ENCODE measurements at regions of chr4 and their contacts with region 1.

Region 1: GRCh38 chr4:131084997-131085396 is 1989.0 kb downstream of the C4orf33 start:
- DNase-seq: no peak
- H3K4me3 Mint-ChIP-seq: no peak overlapping the region
- H3K27ac Mint-ChIP-seq: peak overlapping the region; percentile 50
- H3K4me1 Mint-ChIP-seq: peaks cover 11% of the 10 kb centered on the region
- H3K27me3 Mint-ChIP-seq: no peaks in the 10 kb centered on the region
- CTCF ChIP-seq: no peak

Region 2: GRCh38 chr4:130359542-130359941 is 725.5 kb before region 1 on chr4:
- CTCF ChIA-PET with region 1: no interaction called
- POLR2A ChIA-PET with region 1: no interaction called
- intact Hi-C with region 1: loop called (anchors 10 kb)
- DNase-seq: peak; percentile 39
- H3K4me3 Mint-ChIP-seq: no peak overlapping the region
- H3K27ac Mint-ChIP-seq: no peak overlapping the region
- H3K4me1 Mint-ChIP-seq: no peaks in the 10 kb centered on the region
- H3K27me3 Mint-ChIP-seq: no peaks in the 10 kb centered on the region
- CTCF ChIP-seq: peak; percentile 65